CD14-positive monocyte (primary cell): ENCODE measurements at regions of chr2 and their contacts with region 1.

Region 1: DNA sequence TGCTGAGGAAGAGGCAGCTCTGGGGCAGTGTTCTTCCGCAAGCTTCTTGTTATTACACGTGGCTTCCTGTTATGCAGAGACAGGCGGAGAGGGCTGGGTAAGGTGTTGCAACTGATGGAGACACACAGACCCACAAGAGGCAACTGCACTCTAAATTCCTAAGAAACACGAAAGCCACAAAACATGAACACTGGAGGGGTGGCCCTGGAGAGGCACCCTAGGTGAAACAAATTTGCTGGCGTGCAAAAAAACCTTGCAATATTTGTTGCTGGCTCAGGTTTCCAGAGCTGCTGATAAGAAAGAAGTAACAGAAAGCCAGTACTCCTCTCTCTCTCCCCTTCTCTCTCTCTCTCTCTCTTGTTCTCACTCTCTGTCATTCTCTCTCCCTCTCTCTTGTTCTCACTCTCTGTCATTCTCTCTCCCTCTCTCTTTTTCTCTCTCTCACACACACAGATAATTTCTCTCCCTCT is 31.8 kb downstream of the ARHGAP25 start:
- DNase-seq: peak; percentile 82 to 94 (median 91)
- H3K4me3 ChIP-seq: peak overlapping the region in 1 of 3 experiments; percentile 55
- H3K4me3 Mint-ChIP-seq: peak overlapping the region; percentile 50 to 79
- H3K27ac ChIP-seq: peak overlapping the region; percentile 66 to 93
- H3K27ac Mint-ChIP-seq: peak overlapping the region; percentile 93 to 99 (median 97)
- H3K4me1 ChIP-seq: peaks cover 100% of the 10 kb centered on the region in 2 donors
- H3K4me1 Mint-ChIP-seq: peaks cover 95% of the 10 kb centered on the region
- H3K27me3 ChIP-seq: no peaks in the 10 kb centered on the region
- H3K27me3 Mint-ChIP-seq: no peaks in the 10 kb centered on the region
- CTCF ChIP-seq: no peak

Region 2: DNA sequence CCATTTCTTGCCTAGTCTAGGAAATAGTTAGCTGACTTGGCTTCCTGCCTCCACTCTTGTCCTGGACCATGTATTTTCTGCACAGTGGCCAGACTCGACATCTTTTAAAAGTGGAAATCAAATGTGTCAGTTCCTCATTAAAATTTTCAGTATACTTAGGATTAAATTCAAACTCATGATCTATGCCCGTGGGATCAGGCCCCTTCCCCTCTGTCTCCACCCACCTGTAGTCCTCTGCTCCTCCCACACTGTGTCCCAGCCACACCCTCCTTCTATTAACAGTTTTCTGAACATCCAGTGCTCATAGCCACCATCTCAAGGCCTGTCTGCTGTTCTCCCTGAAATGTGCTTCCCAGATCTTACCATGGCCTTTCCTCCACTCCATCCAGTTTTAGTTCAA is 18.5 kb before region 1 on chr2:
- intact Hi-C with region 1: loop called in 1 of 2 experiments (anchors 2 kb)
- DNase-seq: no peak
- H3K4me3 ChIP-seq: no peak overlapping the region
- H3K4me3 Mint-ChIP-seq: peak overlapping the region in 1 of 2 donors; percentile 26
- H3K27ac ChIP-seq: peak overlapping the region; percentile 29 to 96
- H3K27ac Mint-ChIP-seq: peak overlapping the region; percentile 68 to 98 (median 84)
- H3K4me1 ChIP-seq: peaks cover 78 to 87% of the 10 kb centered on the region in 2 donors
- H3K4me1 Mint-ChIP-seq: peaks cover 88% of the 10 kb centered on the region
- H3K27me3 ChIP-seq: no peaks in the 10 kb centered on the region
- H3K27me3 Mint-ChIP-seq: no peaks in the 10 kb centered on the region
- CTCF ChIP-seq: no peak

Region 3: DNA sequence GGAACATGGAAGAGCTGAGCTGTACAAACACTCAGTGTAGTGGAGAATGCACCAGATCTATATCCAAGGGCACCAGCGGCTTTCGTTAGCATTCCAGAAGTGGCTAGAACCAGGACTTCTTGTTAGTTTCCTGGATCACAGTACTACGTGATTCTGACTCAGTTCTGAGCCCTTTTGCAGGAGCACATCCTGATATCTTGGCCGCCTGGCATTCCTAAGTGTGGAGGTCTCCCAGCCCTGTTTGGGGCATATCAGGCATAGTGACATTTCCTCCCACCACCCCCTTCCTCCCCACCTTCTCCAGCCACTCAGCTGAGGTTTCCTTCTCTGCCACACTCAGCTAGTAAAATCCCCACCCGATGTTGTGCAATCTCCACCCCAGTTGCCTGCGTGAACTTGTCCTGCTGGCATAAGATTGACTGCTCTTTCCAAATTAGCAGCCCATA is 41.4 kb after region 1 on chr2:
- intact Hi-C with region 1: loop called in 1 of 2 experiments (anchors 5 kb)
- DNase-seq: peak; percentile 74 to 90 (median 83)
- H3K4me3 ChIP-seq: peak overlapping the region in 1 of 3 experiments; percentile 10
- H3K4me3 Mint-ChIP-seq: peak overlapping the region; percentile 9 to 24
- H3K27ac ChIP-seq: peak overlapping the region; percentile 65 to 90
- H3K27ac Mint-ChIP-seq: peak overlapping the region; percentile 86 to 98 (median 95)
- H3K4me1 ChIP-seq: peaks cover 64 to 68% of the 10 kb centered on the region in 2 donors
- H3K4me1 Mint-ChIP-seq: peaks cover 69% of the 10 kb centered on the region
- H3K27me3 ChIP-seq: no peaks in the 10 kb centered on the region
- H3K27me3 Mint-ChIP-seq: peaks cover 0 to 4% (median 0%) of the 10 kb centered on the region in 3 donors
- CTCF ChIP-seq: no peak